ENCODE measurements at regions of chr16 and their contacts with region 1.

Region 1: DNA sequence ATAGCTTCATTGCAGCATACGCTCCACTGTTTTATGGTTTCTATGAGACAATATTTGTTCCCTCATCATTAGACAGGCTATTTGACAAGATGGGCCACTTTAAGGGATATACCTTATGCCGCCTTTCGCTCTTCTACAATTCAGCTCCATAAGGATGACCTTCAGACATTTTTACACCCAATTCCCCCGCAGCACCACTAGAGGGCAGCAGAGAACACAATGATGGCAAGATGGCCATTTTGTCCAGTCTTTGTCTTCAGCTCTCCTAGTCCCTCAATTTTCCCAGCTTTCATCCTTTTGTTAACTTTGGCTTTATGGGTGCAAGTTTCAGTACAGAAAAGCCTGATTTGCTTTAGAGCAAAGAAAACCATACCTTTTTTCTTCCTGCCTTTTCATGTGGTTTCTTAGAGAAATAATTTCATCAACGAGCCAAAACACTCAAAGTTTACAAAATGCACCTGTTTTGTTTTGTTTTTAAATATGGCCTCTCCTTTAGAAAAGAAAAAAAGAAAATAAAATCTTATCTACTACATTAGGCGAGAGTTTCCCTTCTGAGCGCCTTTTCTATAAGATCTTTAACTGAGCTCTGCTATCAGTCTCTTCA is 355.3 kb downstream of the TOX3 start:
- DNase-seq: peak; percentile 80
- H3K4me3 Mint-ChIP-seq: no peak overlapping the region
- H3K27ac Mint-ChIP-seq: no peak overlapping the region
- H3K4me1 Mint-ChIP-seq: peaks cover 11% of the 10 kb centered on the region
- H3K27me3 Mint-ChIP-seq: no peaks in the 10 kb centered on the region
- CTCF ChIP-seq: peak; percentile 89

Region 2: GRCh38 chr16:52149003-52149402 is 42.6 kb before region 1 on chr16:
- CTCF ChIA-PET with region 1: no interaction called
- intact Hi-C with region 1: no loop called
- DNase-seq: no peak
- H3K4me3 Mint-ChIP-seq: no peak overlapping the region
- H3K27ac Mint-ChIP-seq: no peak overlapping the region
- H3K4me1 Mint-ChIP-seq: no peaks in the 10 kb centered on the region
- H3K27me3 Mint-ChIP-seq: no peaks in the 10 kb centered on the region
- CTCF ChIP-seq: no peak

Region 3: GRCh38 chr16:52293204-52293603 is 101.6 kb after region 1 on chr16:
- CTCF ChIA-PET with region 1: no interaction called
- intact Hi-C with region 1: loop called (anchors 5 kb)
- DNase-seq: no peak
- H3K4me3 Mint-ChIP-seq: no peak overlapping the region
- H3K27ac Mint-ChIP-seq: no peak overlapping the region
- H3K4me1 Mint-ChIP-seq: peaks cover 49% of the 10 kb centered on the region
- H3K27me3 Mint-ChIP-seq: no peaks in the 10 kb centered on the region
- CTCF ChIP-seq: no peak

Region 4: GRCh38 chr16:52497067-52497816 is 305.6 kb after region 1 on chr16:
- CTCF ChIA-PET with region 1: no interaction called
- intact Hi-C with region 1: loop called (anchors 5 kb)
- DNase-seq: no peak
- H3K4me3 Mint-ChIP-seq: peak overlapping the region; percentile 20
- H3K27ac Mint-ChIP-seq: peak overlapping the region; percentile 79
- H3K4me1 Mint-ChIP-seq: peaks cover 92% of the 10 kb centered on the region
- H3K27me3 Mint-ChIP-seq: no peaks in the 10 kb centered on the region
- CTCF ChIP-seq: no peak

Region 5: DNA sequence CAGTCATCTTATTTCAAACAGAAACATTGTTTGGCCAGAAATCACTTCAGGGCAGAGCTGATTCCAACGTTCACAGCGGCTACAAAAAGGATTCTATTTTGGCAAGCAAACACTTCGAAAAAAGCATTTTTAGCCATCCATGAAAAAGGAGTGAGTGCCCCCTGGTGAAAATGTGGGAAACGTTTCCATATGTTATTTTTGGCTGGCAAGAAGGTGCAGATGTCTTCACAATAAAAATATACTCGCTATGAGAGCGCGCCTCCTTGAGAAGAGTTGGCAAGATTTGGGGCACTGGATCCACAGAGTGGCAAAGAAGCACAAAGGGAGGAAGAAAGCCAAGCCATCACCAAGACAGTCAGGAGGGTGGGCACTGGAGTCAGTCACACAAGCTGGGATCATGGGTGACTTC is 670.0 kb after region 1 on chr16:
- CTCF ChIA-PET with region 1: interaction called, 24 read pairs
- intact Hi-C with region 1: loop called (anchors 2 kb)
- DNase-seq: peak; percentile 61
- H3K4me3 Mint-ChIP-seq: no peak overlapping the region
- H3K27ac Mint-ChIP-seq: no peak overlapping the region
- H3K4me1 Mint-ChIP-seq: peaks cover 36% of the 10 kb centered on the region
- H3K27me3 Mint-ChIP-seq: no peaks in the 10 kb centered on the region
- CTCF ChIP-seq: peak; percentile 48

Measured in Calu3 (cell line).